ENCODE measurements at regions of chr11 and their contacts with region 1.

Region 1: DNA sequence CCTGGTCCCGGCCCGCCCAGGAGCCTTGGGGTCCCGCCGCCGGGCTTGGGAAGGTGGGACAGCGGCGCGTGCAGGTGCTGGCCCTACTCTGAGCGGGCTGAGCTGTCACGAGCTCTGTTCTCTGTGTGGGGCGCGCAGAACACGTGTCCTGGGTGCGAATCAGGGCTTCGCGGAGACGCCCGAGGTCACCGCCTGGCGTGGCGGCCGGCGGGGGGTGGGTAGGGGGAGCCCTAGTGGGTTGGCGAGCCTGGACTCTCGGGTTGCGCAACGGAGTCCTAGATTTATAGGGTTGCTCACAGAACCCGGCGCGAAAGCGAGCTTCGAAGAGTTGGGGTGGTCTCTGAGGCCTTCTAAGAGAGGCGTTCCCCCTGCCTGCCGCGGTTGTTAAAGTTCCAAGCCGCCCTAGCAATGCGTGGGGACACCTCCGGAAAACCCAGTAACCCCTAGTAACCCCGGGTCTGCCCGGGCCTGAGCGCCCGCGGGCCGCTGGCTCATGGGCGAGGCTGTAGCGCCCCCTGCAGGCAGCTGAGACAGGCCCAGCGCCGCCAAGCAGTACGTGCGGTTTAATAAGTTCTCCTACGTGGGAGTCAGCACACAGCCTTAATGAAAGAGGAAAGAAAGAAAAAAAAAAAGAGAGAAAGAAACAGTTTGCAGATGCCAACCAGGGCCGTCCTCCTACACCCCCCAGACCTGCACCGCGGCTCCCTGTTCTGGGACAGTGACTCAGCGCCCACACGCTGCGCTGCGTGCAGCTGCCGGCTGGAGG is 2.8 kb downstream of the ADM start:
- DNase-seq: peak; percentile 95
- H3K4me3 Mint-ChIP-seq: peak overlapping the region; percentile 93
- H3K27ac Mint-ChIP-seq: peak overlapping the region; percentile 86
- H3K4me1 Mint-ChIP-seq: peaks cover 55% of the 10 kb centered on the region
- H3K27me3 Mint-ChIP-seq: peaks cover 46% of the 10 kb centered on the region

Region 2: GRCh38 chr11:8688414-8689362 is 1618.9 kb before region 1 on chr11:
- intact Hi-C with region 1: loop called (anchors 10 kb)
- DNase-seq: peak; percentile 96
- H3K4me3 Mint-ChIP-seq: peak overlapping the region; percentile 94
- H3K27ac Mint-ChIP-seq: peak overlapping the region; percentile 88
- H3K4me1 Mint-ChIP-seq: peaks cover 43% of the 10 kb centered on the region
- H3K27me3 Mint-ChIP-seq: no peaks in the 10 kb centered on the region

Region 3: GRCh38 chr11:9573052-9573774 is 734.4 kb before region 1 on chr11 and contains the start of gene WEE1:
- intact Hi-C with region 1: loop called (anchors 10 kb)
- DNase-seq: peak; percentile 100
- H3K4me3 Mint-ChIP-seq: peak within 1 kb of the TSS; percentile 96
- H3K27ac Mint-ChIP-seq: peak within 1 kb of the TSS; percentile 93
- H3K4me1 Mint-ChIP-seq: peaks cover 30% of the 10 kb centered on the region
- H3K27me3 Mint-ChIP-seq: peaks cover 6% of the 10 kb centered on the region
- total RNA-seq, gene WEE1: 55.5 and 57.7 TPM in 2 replicates

Region 4: GRCh38 chr11:9840460-9841004 is 467.1 kb before region 1 on chr11:
- intact Hi-C with region 1: loop called (anchors 5 kb)
- DNase-seq: peak; percentile 71
- H3K4me3 Mint-ChIP-seq: peak overlapping the region; percentile 23
- H3K27ac Mint-ChIP-seq: peak overlapping the region; percentile 71
- H3K4me1 Mint-ChIP-seq: peaks cover 33% of the 10 kb centered on the region
- H3K27me3 Mint-ChIP-seq: no peaks in the 10 kb centered on the region

Region 5: GRCh38 chr11:10067629-10068300 is 239.9 kb before region 1 on chr11:
- intact Hi-C with region 1: no loop called
- DNase-seq: no peak
- H3K4me3 Mint-ChIP-seq: no peak overlapping the region
- H3K27ac Mint-ChIP-seq: no peak overlapping the region
- H3K4me1 Mint-ChIP-seq: no peaks in the 10 kb centered on the region
- H3K27me3 Mint-ChIP-seq: peaks cover 1% of the 10 kb centered on the region

Region 6: DNA sequence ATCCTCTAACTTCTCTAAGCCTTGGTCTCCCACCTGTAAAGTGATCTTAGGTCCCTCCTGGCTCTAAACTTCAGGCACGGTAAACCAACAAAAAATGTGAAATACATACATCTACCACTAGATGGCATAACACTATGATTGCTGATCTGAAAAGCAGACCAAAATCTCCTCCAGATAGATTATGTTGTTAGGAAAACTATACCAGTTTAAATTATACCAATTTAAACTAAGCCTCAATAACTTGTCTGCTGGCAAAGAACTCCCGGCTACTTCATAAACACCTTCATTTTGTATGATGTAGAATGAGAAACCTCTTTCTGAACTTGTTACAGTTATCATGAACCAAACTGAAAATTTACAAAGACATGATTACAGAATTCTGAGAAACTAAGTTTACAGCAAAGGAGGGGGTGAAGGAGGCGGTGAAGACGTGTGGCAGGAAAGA is 99.5 kb before region 1 on chr11:
- intact Hi-C with region 1: loop called (anchors 1 kb)
- DNase-seq: peak; percentile 68
- H3K4me3 Mint-ChIP-seq: no peak overlapping the region
- H3K27ac Mint-ChIP-seq: no peak overlapping the region
- H3K4me1 Mint-ChIP-seq: peaks cover 1% of the 10 kb centered on the region
- H3K27me3 Mint-ChIP-seq: peaks cover 21% of the 10 kb centered on the region

Region 7: DNA sequence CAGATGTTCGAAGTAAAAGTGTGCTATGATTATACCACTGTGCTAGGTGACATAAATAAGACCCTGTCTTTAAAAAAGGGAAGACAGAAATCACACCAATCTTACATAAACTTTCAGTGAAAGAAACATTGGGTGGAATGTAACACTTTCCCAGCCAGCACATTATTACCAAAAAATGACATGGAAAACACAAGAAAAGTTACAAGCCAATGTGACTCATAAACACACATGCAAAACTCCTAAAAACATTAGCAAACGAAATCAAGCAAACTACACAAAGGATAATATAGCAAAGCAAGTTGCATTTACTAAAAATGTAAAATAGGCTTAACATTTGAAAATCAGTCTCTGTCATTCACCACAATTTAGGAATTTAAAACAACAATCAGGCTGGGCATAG is 60.6 kb before region 1 on chr11:
- intact Hi-C with region 1: no loop called
- DNase-seq: no peak
- H3K4me3 Mint-ChIP-seq: no peak overlapping the region
- H3K27ac Mint-ChIP-seq: no peak overlapping the region
- H3K4me1 Mint-ChIP-seq: no peaks in the 10 kb centered on the region
- H3K27me3 Mint-ChIP-seq: no peaks in the 10 kb centered on the region

Region 8: DNA sequence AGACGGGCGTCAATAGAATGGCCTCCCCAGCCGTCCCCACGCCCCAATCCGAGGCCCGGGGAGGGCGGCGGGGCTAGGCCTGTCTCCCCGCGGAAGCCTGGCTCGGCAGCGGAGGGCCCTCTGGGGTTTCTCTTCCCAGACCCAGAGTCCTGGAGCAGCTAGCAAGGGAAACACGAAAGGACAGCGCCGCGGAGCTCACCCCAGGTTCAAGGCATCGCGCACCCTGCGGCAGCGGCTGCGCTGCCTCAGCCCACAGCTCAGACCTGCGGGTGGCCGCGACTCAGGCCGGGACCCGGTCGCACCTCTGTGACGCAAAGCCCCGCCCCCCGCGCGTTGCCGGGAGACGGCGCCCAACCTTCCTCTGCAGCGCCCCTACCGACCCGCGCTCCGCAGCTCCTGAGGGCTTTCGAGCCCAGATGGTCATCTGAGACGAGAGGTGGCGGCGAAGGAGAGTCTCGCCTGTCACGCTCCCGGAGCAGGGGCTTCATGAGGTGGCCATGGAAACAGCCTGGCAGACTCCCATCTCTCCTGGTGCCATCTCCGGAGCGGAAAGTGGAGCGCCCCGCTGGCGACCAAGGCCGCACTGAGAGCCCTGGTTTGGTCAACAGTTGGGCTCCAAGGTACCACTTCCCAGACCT is 233.4 kb after region 1 on chr11 and contains the start of gene RNF141:
- intact Hi-C with region 1: loop called (anchors 5 kb)
- DNase-seq: peak; percentile 99
- H3K4me3 Mint-ChIP-seq: peak within 1 kb of the TSS; percentile 92
- H3K27ac Mint-ChIP-seq: peak within 1 kb of the TSS; percentile 78
- H3K4me1 Mint-ChIP-seq: peaks cover 14% of the 10 kb centered on the region
- H3K27me3 Mint-ChIP-seq: peaks cover 3% of the 10 kb centered on the region
- total RNA-seq, gene RNF141: 14.3 and 15.4 TPM in 2 replicates

Region 9: DNA sequence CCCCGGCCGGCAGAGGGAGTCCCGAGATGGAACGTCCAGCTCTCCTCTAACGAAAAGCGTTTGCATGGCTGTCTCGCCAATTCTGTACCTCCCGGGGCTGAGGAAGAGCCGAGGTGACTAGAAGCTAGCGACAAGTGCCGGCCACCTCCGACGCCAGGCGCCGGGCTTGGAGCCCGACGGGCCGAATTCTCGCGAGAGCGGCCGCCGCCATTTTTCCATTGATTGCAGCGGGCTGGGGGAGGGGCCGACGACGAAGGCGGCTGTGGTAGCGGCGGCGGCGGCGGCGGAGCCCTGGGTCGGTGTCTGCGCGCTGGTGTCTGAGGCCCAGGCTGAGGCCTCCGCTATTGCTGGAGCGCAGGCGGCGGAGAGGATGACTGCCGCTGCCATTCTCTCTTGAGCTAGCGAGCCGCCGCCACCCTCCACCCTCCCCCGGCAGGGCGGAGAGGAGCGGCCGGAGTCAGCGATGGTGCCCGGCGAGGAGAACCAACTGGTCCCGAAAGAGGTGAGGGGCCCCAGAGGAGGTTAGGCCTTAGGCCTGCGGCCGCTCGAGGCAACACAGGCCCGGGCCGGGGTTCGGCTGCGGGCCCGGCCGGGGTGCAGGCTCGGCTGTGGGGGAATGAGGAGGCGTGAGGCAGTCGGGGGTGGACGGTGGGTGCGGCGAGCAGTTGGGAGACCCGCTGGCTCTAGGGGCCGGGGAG is 1534.2 kb after region 1 on chr11 and contains the start of gene USP47:
- intact Hi-C with region 1: loop called (anchors 5 kb)
- DNase-seq: peak; percentile 98
- H3K4me3 Mint-ChIP-seq: no peak within 1 kb of the TSS
- H3K27ac Mint-ChIP-seq: no peak within 1 kb of the TSS
- H3K4me1 Mint-ChIP-seq: peaks cover 27% of the 10 kb centered on the region
- H3K27me3 Mint-ChIP-seq: peaks cover 17% of the 10 kb centered on the region
- total RNA-seq, gene USP47: 51.9 and 54.0 TPM in 2 replicates